ENCODE measurements at regions of chrX and their contacts with region 1.

Region 1: DNA sequence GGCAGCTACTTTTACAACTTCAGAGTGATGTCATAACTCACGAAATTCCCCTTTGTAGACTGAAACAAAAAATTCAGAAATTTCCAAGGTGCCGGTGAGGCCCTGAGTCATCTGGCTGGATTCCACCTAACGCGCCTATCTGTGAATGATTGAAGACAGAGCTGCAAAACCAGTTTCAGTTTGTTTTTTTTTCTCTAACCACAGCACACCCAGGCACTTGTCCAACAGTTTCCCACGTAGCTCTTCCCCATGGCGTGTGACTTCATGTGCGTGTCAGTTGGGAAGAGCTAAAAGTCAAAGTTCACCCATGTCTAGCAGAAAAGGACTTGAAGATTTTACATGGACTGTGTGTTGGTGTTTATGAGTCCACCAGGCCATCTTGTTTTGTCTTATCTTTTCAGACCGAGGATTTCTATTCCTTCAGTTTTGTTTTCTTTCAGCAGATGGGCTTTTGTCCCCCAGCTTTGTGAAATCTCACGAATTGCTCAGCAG is 16.4 kb downstream of the TCEANC start:
- DNase-seq: peak in 1 of 2 donors; percentile 63
- H3K4me3 ChIP-seq: no peak overlapping the region
- CTCF ChIP-seq: no peak
- POLR2A ChIP-seq: no peak

Region 2: GRCh38 chrX:13257223-13258051 is 411.9 kb before region 1 on chrX:
- intact Hi-C with region 1: no loop called
- DNase-seq: no peak
- H3K4me3 ChIP-seq: no peak overlapping the region
- CTCF ChIP-seq: no peak
- POLR2A ChIP-seq: no peak

Region 3: DNA sequence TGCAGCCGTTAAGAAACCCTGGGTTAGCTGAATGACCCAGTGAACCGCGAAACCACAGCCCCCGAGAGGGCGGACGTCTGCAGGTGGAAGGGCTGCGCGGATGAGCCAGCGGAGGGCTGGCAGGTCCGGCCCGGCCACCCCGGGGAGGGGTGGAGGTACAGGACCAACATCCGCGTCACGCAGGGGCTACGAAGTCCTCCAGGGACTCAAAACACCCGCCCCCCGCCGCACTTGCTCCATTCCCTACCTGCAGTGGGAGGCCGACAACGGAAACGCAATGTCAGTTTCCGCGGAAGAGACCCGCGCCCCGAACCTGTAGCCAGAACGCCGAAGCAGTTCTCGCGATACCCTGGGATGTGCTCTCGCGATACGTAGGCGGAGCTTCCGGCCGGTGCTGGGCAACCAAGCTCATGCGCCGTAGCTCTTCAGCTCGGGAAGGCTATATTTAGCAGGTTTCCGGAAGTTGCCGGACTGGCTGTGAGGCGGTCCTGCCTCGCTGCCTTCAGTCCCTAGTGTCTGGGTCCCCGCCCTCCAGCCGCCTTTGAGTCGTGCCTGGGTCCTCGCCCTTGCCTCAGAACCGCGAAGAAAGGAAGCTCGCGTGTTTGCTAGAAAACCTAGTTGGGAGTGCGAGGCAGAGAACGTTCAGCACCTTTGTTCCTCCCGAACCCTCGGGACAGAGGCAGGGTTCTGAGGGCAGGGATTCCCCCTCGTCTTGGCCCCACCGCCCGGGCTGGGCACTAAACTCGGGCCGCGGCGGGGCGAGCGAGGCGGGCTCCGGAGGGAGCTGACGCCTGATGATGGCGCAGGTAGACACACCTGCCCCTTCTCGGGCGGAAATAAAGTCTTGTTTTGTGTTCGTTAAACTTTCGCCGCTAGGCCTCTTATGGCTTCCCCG is 65.2 kb after region 1 on chrX and contains the starts of genes OFD1 and TRAPPC2:
- intact Hi-C with region 1: loop called (anchors 10 kb)
- DNase-seq: peak; percentile 90 to 98
- H3K4me3 ChIP-seq: peak within 1 kb of the TSS; percentile 58
- CTCF ChIP-seq: no peak
- POLR2A ChIP-seq: peak in 1 of 2 donors; percentile 57
- total RNA-seq, gene OFD1: 20.0 to 69.6 (median 27.5) TPM
- total RNA-seq, gene TRAPPC2: 12.6 to 16.1 (median 14.9) TPM

Measured in lower leg skin (tissue), 4 donors.